ENCODE measurements at regions of chr12 and their contacts with region 1.

Region 1: DNA sequence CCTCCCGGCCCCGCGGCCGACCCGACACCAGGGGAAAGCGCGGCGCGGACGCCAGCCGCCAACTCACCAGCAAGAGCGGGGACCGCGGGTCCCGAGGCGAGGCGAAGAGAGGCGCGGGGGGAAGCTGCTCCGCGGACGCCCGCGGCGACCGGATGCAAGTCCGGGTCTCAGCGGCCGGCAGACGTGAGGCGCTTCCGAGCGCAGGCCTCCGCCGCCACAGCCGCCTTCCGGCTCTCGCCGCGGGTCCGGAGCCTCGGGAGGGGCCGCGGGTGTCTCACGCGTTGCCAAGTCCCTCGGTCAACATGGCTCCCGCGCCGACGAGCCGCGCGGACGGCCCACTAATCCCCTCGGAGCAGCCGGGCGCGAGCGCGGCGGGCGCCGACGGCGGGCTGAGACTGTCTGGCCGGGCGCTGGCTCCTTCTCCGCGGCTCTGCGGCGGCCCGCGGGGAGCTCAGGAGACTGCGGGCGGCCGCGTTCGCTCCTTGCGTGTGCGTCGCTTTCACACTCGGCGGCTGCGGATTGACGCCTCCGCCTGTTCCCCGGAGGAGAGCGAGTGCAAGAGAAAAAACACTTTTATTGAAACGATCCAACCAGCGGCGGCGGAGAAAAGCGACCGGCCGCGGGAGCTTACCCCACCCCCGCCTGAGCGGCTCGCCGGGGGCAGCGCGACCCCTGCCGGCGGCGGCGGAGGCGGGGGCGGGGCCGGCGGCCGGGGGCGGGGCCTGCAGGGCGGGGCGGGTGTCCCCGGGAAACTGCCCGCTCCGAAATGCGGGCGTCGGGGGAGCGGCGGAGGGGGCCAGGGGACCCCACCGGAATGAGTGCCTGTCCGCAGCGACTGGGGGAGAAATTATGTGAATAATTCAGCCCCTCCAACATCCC is at the start of gene CDK17:
- DNase-seq: peak; percentile 84 to 94 (median 91)
- H3K4me3 ChIP-seq: peak within 1 kb of the TSS; percentile 67
- H3K4me3 Mint-ChIP-seq: peak within 1 kb of the TSS; percentile 95 to 99 (median 96)
- H3K27ac ChIP-seq: peak within 1 kb of the TSS; percentile 94
- H3K27ac Mint-ChIP-seq: peak within 1 kb of the TSS; percentile 95 to 99 (median 98)
- H3K4me1 ChIP-seq: peaks cover 37% of the 10 kb centered on the region
- H3K4me1 Mint-ChIP-seq: peaks cover 46 to 50% (median 48%) of the 10 kb centered on the region in 3 donors
- H3K27me3 ChIP-seq: no peaks in the 10 kb centered on the region
- H3K27me3 Mint-ChIP-seq: peaks cover 0 to 2% of the 10 kb centered on the region in 2 donors
- total RNA-seq, gene CDK17: 34.6 to 36.0 TPM

Region 2: GRCh38 chr12:96108321-96108720 is 291.8 kb before region 1 on chr12:
- CTCF ChIA-PET with region 1: no interaction called
- POLR2A ChIA-PET with region 1: no interaction called
- DNase-seq: peak in 2 of 5 donors; percentile 1 to 25
- H3K4me3 ChIP-seq: no peak overlapping the region
- H3K4me3 Mint-ChIP-seq: peak overlapping the region in 6 of 7 donors; percentile 38 to 84 (median 74)
- H3K27ac ChIP-seq: no peak overlapping the region
- H3K27ac Mint-ChIP-seq: peak overlapping the region in 7 of 8 donors; percentile 13 to 91 (median 71)
- H3K4me1 ChIP-seq: peaks cover 6% of the 10 kb centered on the region
- H3K4me1 Mint-ChIP-seq: peaks cover 7 to 13% (median 11%) of the 10 kb centered on the region in 3 donors
- H3K27me3 ChIP-seq: no peaks in the 10 kb centered on the region
- H3K27me3 Mint-ChIP-seq: peaks cover 0 to 3% of the 10 kb centered on the region in 2 donors

Region 3: DNA sequence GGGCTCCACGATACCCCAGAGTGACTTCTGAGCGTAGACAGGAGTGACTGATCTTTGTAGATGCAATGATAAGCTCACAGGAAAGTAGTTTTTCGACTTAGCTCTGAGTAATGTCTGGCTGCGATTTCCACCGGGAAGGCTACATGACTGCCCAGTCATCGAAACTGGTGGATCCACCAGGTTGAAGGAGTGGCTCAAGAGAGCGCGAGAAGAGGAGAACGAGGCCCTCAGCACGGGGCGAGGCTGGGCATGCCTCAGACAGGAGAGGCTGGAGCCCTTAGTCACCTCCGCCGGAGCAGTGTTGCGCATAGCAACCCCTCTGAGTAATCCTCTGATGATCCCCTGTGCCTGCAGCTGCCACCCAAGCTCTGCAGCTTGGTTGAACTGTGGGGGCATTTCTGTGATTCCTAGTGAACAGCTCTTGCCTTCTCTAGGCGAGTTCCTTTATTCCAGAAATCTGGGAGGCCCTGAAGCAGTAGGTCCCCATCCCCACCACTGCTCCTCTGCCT is 180.4 kb before region 1 on chr12:
- CTCF ChIA-PET with region 1: interaction called, 28 read pairs
- POLR2A ChIA-PET with region 1: interaction called, 3 read pairs
- DNase-seq: no peak
- H3K4me3 ChIP-seq: no peak overlapping the region
- H3K4me3 Mint-ChIP-seq: peak overlapping the region in 1 of 7 donors; percentile 23
- H3K27ac ChIP-seq: no peak overlapping the region
- H3K27ac Mint-ChIP-seq: peak overlapping the region in 6 of 8 donors; percentile 8 to 84 (median 66)
- H3K4me1 ChIP-seq: peaks cover 7% of the 10 kb centered on the region
- H3K4me1 Mint-ChIP-seq: peaks cover 21 to 58% (median 44%) of the 10 kb centered on the region in 3 donors
- H3K27me3 ChIP-seq: no peaks in the 10 kb centered on the region
- H3K27me3 Mint-ChIP-seq: no peaks in the 10 kb centered on the region

Region 4: DNA sequence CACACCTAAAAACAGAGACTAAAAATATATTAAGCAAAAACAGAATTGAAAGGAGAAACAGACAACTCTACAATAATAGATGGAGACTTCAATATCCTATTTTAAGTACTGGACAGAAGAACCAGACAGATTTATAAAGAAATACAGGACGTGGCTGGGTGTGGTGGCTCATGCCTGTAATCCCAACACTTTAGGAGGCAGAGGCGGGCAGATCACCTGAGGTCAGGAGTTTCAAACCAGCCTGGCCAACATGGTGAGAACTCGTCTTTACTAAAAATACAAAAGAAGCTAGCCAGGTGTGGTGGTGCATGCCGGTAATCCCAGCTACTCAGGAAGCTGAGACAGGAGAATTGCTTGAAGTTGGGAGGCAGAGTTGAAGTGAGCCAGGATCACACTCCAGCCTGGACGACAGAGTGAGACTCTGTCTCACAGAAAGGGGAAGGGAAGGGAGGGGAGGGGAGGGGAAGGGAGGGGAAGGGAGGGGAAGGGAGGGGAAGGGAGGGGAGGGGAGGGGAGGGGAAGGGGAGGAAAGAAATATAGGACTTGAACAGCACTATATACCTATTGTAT is 52.9 kb before region 1 on chr12:
- CTCF ChIA-PET with region 1: interaction called, 15 read pairs
- POLR2A ChIA-PET with region 1: interaction called, 3 read pairs
- DNase-seq: no peak
- H3K4me3 ChIP-seq: peak overlapping the region; percentile 13
- H3K4me3 Mint-ChIP-seq: peak overlapping the region in 5 of 7 donors; percentile 5 to 62 (median 37)
- H3K27ac ChIP-seq: no peak overlapping the region
- H3K27ac Mint-ChIP-seq: peak overlapping the region in 7 of 8 donors; percentile 7 to 82 (median 34)
- H3K4me1 ChIP-seq: peaks cover 49% of the 10 kb centered on the region
- H3K4me1 Mint-ChIP-seq: peaks cover 70 to 88% (median 81%) of the 10 kb centered on the region in 3 donors
- H3K27me3 ChIP-seq: no peaks in the 10 kb centered on the region
- H3K27me3 Mint-ChIP-seq: no peaks in the 10 kb centered on the region

Region 5: DNA sequence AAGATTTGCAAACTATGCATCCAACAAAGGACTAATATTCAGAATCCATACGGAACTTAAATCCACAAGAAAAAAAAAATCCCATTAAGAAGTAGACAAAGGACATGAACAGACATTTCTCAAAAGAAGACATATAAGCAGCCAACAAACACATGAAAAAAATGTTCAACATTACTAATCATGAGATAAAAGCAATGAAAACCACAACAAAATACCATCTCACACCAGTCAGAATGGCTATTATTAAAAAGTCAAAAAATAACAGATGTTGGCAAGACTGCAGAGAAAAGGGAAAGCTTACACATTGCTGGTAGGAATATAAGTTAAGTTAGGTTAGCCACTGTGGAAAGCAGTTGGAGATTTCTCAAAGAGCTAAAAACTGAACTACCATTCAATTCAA is 16.2 kb before region 1 on chr12:
- CTCF ChIA-PET with region 1: interaction called, 20 read pairs
- POLR2A ChIA-PET with region 1: interaction called, 3 read pairs
- DNase-seq: no peak
- H3K4me3 ChIP-seq: no peak overlapping the region
- H3K4me3 Mint-ChIP-seq: peak overlapping the region in 3 of 7 donors; percentile 12 to 30 (median 30)
- H3K27ac ChIP-seq: no peak overlapping the region
- H3K27ac Mint-ChIP-seq: peak overlapping the region in 2 of 8 donors; percentile 1 to 22
- H3K4me1 ChIP-seq: peaks cover 51% of the 10 kb centered on the region
- H3K4me1 Mint-ChIP-seq: peaks cover 70 to 92% (median 84%) of the 10 kb centered on the region in 3 donors
- H3K27me3 ChIP-seq: no peaks in the 10 kb centered on the region
- H3K27me3 Mint-ChIP-seq: peaks cover 0 to 3% of the 10 kb centered on the region in 2 donors

Region 6: DNA sequence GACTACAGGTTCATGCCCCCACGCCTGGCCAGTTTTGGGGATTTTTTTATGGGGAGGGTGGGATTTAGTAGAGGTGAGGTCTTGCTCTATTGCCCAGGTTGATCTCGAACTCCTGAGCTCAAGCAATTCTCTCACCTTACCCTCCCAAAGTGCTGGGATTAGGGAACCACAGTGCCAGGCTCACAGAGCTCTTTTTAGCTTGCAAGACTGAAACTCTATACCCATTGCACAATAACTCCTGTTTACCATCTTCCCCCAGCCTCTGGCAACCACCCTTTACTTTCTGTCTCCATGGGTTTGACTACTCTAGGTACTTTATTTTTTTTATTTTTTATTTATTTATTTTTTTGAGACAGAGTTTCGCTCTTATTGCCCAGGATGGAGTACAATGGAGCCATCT is 25.8 kb after region 1 on chr12:
- CTCF ChIA-PET with region 1: no interaction called
- POLR2A ChIA-PET with region 1: no interaction called
- DNase-seq: no peak
- H3K4me3 ChIP-seq: no peak overlapping the region
- H3K4me3 Mint-ChIP-seq: no peak overlapping the region
- H3K27ac ChIP-seq: no peak overlapping the region
- H3K27ac Mint-ChIP-seq: peak overlapping the region in 2 of 8 donors; percentile 5 to 89
- H3K4me1 ChIP-seq: peaks cover 6% of the 10 kb centered on the region
- H3K4me1 Mint-ChIP-seq: peaks cover 7 to 28% (median 26%) of the 10 kb centered on the region in 3 donors
- H3K27me3 ChIP-seq: no peaks in the 10 kb centered on the region
- H3K27me3 Mint-ChIP-seq: peaks cover 0 to 3% of the 10 kb centered on the region in 2 donors

Region 7: GRCh38 chr12:96489103-96490056 is 89.2 kb after region 1 on chr12 and contains the start of gene CFAP54:
- CTCF ChIA-PET with region 1: interaction called, 35 read pairs
- POLR2A ChIA-PET with region 1: interaction called, 7 read pairs
- DNase-seq: peak; percentile 92 to 97 (median 93)
- H3K4me3 ChIP-seq: peak within 1 kb of the TSS; percentile 66
- H3K4me3 Mint-ChIP-seq: peak within 1 kb of the TSS; percentile 82 to 94 (median 92)
- H3K27ac ChIP-seq: peak within 1 kb of the TSS; percentile 79
- H3K27ac Mint-ChIP-seq: peak within 1 kb of the TSS; percentile 61 to 99 (median 97)
- H3K4me1 ChIP-seq: peaks cover 20% of the 10 kb centered on the region
- H3K4me1 Mint-ChIP-seq: peaks cover 22 to 41% (median 39%) of the 10 kb centered on the region in 3 donors
- H3K27me3 ChIP-seq: no peaks in the 10 kb centered on the region
- H3K27me3 Mint-ChIP-seq: peaks cover 0 to 7% of the 10 kb centered on the region in 2 donors
- total RNA-seq, gene CFAP54: 0.66 to 0.88 TPM